MCF 10A (cell line): ENCODE measurements at regions of chr3 and their contacts with region 1.

Region 1: DNA sequence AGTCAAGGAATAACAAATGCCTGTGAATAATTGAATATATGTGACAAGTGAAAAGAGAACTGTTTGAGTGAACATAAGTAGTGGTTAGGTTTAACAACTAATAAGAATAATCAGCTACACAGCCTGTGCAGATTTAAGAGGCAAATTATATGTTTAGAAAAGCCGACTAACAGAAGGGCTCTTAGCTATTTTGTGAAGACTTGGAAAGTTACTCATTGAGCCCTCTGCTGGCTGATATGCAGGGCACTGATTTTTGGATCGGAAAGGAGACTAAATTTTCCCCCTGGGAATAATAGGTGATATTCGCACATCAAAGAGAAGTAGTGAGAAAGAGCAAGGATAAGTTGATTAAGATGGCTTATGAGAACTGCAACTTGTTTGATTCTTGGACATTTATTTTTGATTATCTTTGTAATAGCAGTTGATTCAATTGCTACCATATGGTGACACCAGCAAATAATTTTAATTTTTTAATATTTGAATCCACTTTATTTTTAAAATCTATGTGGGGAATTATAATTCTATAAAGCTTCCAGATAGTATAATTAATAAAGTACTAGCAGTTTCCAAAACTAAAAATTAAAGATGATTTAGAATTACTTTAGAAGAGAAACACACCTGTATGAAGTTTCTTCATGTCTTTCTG is 156.2 kb downstream of the NLGN1 start:
- DNase-seq: peak; percentile 63
- H3K4me3 Mint-ChIP-seq: no peak overlapping the region
- H3K27ac Mint-ChIP-seq: no peak overlapping the region
- H3K4me1 Mint-ChIP-seq: no peaks in the 10 kb centered on the region
- H3K27me3 Mint-ChIP-seq: peaks cover 91% of the 10 kb centered on the region
- CTCF ChIP-seq: peak; percentile 51

Region 2: DNA sequence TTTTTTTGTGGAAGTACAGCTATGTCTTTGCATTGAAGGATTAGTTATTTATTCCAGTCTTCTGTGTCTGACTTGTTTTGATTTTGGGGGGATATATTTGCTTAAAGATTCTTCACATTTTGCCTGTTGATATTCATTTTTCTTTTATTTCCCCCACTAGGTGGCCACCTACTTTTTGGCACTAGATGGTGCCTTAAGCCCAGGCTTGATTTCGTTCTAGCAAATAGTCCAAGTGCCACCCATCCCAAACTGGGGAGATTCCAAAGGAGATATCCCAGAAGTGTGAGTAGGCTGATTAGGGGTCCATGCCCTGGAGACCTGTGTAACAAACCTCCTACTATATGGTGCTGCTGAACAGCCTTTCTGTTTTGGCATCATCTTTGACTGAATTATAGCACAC is 332.7 kb before region 1 on chr3:
- CTCF ChIA-PET with region 1: interaction called, 4 read pairs
- POLR2A ChIA-PET with region 1: no interaction called
- intact Hi-C with region 1: loop called (anchors 1 kb)
- DNase-seq: peak; percentile 54
- H3K4me3 Mint-ChIP-seq: no peak overlapping the region
- H3K27ac Mint-ChIP-seq: no peak overlapping the region
- H3K4me1 Mint-ChIP-seq: no peaks in the 10 kb centered on the region
- H3K27me3 Mint-ChIP-seq: peaks cover 82% of the 10 kb centered on the region
- CTCF ChIP-seq: peak; percentile 27

Region 3: DNA sequence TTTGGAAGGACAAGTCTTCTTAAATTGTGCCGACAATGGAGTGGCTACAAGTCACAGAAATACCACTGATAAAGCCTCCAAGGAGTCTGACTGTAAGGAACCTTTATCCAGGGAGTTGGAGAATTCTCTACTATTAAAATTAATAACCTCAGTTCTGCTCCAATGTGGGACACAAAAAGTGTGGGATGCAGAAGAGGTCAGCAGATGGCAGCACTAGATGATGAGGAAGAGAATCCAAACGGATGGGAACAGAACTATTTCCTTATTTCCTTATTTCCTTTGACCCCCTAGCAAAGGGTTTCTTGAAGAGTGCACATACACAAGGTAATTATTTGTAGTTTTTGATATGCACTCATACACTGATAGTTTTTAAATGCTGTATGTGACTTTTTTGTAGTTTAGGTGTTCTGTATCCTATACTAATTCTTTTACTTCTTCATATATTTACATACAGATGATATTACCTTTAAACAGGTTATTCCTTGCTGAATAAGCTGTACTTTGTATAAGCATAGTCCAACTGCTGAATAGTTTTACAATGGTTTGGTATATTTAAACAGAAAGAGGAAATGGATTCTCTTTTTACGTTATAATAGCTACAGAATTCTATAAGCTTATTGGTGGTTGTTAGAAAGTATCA is 181.8 kb before region 1 on chr3:
- CTCF ChIA-PET with region 1: interaction called, 10 read pairs
- POLR2A ChIA-PET with region 1: no interaction called
- intact Hi-C with region 1: loop called (anchors 1 kb)
- DNase-seq: peak; percentile 58
- H3K4me3 Mint-ChIP-seq: no peak overlapping the region
- H3K27ac Mint-ChIP-seq: no peak overlapping the region
- H3K4me1 Mint-ChIP-seq: no peaks in the 10 kb centered on the region
- H3K27me3 Mint-ChIP-seq: peaks cover 70% of the 10 kb centered on the region
- CTCF ChIP-seq: peak; percentile 35

Region 4: GRCh38 chr3:173411375-173411973 is 142.3 kb before region 1 on chr3:
- CTCF ChIA-PET with region 1: interaction called, 28 read pairs
- POLR2A ChIA-PET with region 1: no interaction called
- intact Hi-C with region 1: loop called (anchors 1 kb)
- DNase-seq: peak; percentile 52
- H3K4me3 Mint-ChIP-seq: no peak overlapping the region
- H3K27ac Mint-ChIP-seq: no peak overlapping the region
- H3K4me1 Mint-ChIP-seq: no peaks in the 10 kb centered on the region
- H3K27me3 Mint-ChIP-seq: peaks cover 76% of the 10 kb centered on the region
- CTCF ChIP-seq: peak; percentile 39